Activated B cell treated with CpG ODN at 0.5 μM for 24 hours (primary cell): ENCODE measurements at regions of chr1 and their contacts with region 1.

Region 1: DNA sequence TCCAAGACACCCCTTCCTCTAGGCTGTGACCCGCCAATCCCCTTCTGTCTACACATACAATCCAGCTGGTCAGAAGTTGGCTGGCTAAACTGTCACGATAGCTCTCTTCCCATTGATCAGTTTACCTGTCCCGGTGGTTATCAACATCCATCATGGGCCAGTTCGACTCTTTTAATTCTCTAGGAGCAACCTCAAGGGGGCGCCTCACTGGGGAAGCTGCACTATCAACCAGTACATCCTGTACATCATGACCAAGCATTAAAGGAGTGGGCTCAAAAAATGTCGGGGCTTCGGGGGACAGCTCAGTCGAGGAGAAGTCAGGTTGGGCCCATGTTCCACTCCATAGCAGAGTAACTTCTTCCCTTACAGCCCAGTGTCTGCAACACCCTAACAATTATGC is 53.2 kb upstream of the B3GALNT2 start:
- DNase-seq: no peak
- ATAC-seq: no peak
- H3K4me3 Mint-ChIP-seq: no peak overlapping the region
- H3K27ac Mint-ChIP-seq: no peak overlapping the region
- H3K4me1 Mint-ChIP-seq: no peaks in the 10 kb centered on the region
- H3K27me3 Mint-ChIP-seq: no peaks in the 10 kb centered on the region
- CTCF ChIP-seq: no peak

Region 2: DNA sequence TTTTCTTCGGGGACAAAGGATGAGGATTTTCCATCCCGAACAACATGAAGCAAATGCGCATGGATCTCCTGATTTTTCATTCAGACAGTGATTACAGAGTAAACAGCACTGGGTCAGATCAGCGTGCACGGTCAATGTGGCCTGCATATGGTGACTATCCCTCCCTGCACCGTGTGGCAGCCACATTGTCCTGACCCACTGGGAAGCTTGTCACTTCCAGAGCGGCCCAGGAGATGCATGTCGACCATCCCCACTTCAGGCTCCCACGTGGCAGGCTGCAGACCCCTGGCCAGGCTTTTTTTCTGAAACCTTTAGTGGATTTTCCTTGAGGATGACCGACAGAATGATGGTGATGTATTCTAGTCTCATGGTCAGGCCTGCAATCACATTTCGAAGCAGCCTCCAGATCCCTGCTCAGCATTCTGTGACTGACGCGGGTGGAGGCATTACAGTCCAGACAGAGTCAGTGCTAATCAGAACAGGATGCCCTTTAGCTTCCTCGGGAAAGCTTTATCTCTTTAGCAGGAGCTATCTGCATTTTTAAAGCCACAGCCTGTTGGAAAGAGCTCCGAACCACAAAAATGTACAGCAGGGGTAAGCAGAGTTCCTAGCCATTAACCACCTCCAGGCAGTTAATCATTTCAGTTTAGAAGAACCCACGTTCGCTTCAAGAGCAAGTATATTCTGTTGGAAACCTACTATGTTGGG is 1004.2 kb before region 1 on chr1:
- CTCF ChIA-PET with region 1: no interaction called
- POLR2A ChIA-PET with region 1: no interaction called
- intact Hi-C with region 1: no loop called
- DNase-seq: no peak
- ATAC-seq: no peak
- H3K4me3 Mint-ChIP-seq: no peak overlapping the region
- H3K27ac Mint-ChIP-seq: no peak overlapping the region
- H3K4me1 Mint-ChIP-seq: no peaks in the 10 kb centered on the region
- H3K27me3 Mint-ChIP-seq: no peaks in the 10 kb centered on the region
- CTCF ChIP-seq: no peak

Region 3: GRCh38 chr1:236753516-236753915 is 1196.0 kb after region 1 on chr1:
- CTCF ChIA-PET with region 1: no interaction called
- POLR2A ChIA-PET with region 1: interaction called, 10 read pairs
- intact Hi-C with region 1: no loop called
- DNase-seq: no peak
- ATAC-seq: no peak
- H3K4me3 Mint-ChIP-seq: no peak overlapping the region
- H3K27ac Mint-ChIP-seq: no peak overlapping the region
- H3K4me1 Mint-ChIP-seq: no peaks in the 10 kb centered on the region
- H3K27me3 Mint-ChIP-seq: no peaks in the 10 kb centered on the region
- CTCF ChIP-seq: no peak